Colonic mucosa (tissue), 4 donors: ENCODE measurements at regions of chr14 and their contacts with region 1.

Region 1: GRCh38 chr14:52729925-52730667 is at the start of gene STYX:
- DNase-seq: peak; percentile 99
- H3K4me3 ChIP-seq: peak within 1 kb of the TSS; percentile 92
- H3K27ac ChIP-seq: peak within 1 kb of the TSS; percentile 77
- H3K4me1 ChIP-seq: no peaks in the 10 kb centered on the region
- H3K27me3 ChIP-seq: no peaks in the 10 kb centered on the region
- CTCF ChIP-seq: no peak
- total RNA-seq, gene STYX: 7.4 to 11.2 TPM

Region 2: DNA sequence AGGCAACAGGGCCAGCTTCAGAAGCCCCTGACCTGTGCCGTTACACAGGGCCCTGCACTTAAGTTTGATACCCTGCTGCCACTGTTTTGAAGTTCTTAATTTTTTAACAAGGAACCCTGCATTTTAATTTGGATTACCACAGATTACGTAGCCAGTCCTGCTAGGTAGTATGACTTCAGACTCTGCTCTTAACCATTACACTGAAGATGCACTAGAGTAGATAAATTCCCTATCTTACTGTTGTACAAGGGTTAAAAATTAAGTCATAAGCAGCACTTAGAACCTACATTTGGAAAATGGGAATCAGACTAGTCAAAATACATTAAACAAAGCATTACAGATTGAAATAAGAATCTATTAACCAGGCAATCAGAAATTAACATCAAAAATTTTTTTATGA is 59.0 kb after region 1 on chr14:
- intact Hi-C with region 1: loop called (anchors 10 kb)
- DNase-seq: no peak
- H3K4me3 ChIP-seq: no peak overlapping the region
- H3K27ac ChIP-seq: no peak overlapping the region
- H3K4me1 ChIP-seq: no peaks in the 10 kb centered on the region
- H3K27me3 ChIP-seq: no peaks in the 10 kb centered on the region
- CTCF ChIP-seq: no peak